Ascending aorta (tissue), 2 donors: ENCODE measurements at regions of chr20 and their contacts with region 1.

Region 1: DNA sequence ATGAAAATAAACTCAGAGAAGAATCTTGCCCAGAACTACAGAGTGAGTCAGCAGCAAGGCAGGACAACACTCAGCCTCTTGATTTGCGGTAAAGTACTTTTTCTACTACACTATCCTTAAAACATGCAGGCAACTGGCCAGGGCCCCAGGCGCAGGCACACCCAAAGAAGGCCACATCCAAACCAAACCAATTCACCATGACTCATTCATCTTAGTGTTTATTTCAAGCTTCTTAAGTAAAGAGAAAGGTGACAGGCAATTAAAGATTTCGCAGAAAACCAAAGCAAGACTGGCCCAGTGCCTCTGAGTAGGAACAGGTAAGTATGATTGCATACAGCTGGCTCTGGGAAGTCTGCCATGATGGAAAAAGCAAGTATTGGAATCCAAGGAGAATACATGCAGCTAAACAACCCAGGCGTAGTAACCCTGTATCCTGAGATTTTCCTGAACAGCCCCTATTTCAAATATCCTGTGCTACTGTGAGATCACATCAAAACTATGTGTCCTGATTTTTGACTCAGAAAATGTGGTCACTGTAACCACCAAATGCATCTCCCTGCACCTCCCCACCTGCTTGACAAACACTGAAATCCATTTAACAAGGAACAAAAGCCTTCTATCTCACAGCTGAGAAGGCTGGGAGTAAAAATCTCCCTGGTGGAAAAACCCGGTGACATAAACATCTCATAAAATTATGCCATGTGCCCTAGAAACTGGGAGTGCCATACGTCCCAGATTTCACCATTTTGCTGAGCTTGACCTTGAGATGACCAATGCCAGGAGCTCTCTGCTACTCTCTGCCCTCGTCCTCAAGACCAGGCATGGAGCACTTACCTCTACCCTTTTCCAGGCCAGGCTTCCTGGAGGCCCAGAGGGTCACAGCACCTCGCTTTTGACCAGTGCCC is 12.4 kb downstream of the WFDC3 start:
- DNase-seq: peak; percentile 88 to 97
- H3K4me3 ChIP-seq: no peak overlapping the region
- H3K27ac ChIP-seq: peak overlapping the region; percentile 91 to 92
- H3K4me1 ChIP-seq: peaks cover 26 to 46% of the 10 kb centered on the region in 2 donors
- H3K27me3 ChIP-seq: no peaks in the 10 kb centered on the region
- CTCF ChIP-seq: no peak

Region 2: GRCh38 chr20:45341939-45342859 is 437.1 kb before region 1 on chr20:
- intact Hi-C with region 1: loop called (anchors 5 kb)
- DNase-seq: peak; percentile 69 to 92
- H3K4me3 ChIP-seq: peak overlapping the region; percentile 18 to 80
- H3K27ac ChIP-seq: peak overlapping the region; percentile 93 to 96
- H3K4me1 ChIP-seq: peaks cover 53 to 80% of the 10 kb centered on the region in 2 donors
- H3K27me3 ChIP-seq: no peaks in the 10 kb centered on the region
- CTCF ChIP-seq: peak in 1 of 3 experiments; percentile 7

Region 3: DNA sequence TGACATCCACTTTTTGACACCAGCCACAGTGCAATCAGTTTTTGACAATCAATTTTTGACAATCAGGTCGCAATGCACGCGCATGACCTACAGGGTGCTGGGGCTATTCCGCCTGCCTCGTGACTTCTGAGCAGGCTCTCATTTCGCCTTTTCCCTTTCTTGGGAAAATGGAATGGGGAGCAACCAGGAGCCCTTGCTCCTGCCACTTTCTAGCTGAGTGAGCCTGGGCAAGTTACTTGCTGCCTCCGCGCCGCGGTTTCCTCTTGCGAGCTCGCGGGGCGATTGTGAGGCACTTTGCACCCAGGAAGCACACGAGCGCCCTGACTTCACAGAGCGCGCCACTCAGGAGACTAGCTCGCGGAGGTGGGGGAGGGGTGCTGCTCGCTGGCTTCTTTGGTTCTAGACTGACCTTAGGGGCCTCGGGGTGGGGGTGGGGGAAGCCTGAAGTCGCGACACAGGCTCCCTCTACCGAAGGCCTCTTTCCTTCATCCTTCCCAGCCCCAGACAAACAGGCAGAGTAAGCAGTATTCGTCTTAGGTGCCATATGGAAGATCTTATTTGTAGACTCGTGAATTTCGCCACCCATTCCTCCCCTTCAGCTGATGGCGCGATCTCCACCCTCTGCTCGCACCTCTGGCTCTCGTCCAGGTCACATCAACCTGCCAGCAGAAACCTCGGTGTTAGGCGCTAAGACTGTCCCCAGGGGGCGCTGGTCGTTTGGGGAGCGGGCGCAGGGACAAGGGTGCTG is 405.7 kb before region 1 on chr20:
- intact Hi-C with region 1: loop called (anchors 5 kb)
- DNase-seq: peak in 1 of 2 donors; percentile 93
- H3K4me3 ChIP-seq: peak overlapping the region; percentile 60 to 65
- H3K27ac ChIP-seq: peak overlapping the region; percentile 84 to 92
- H3K4me1 ChIP-seq: peaks cover 0 to 11% of the 10 kb centered on the region in 2 donors
- H3K27me3 ChIP-seq: no peaks in the 10 kb centered on the region
- CTCF ChIP-seq: peak; percentile 84 to 90 (median 86)

Region 4: DNA sequence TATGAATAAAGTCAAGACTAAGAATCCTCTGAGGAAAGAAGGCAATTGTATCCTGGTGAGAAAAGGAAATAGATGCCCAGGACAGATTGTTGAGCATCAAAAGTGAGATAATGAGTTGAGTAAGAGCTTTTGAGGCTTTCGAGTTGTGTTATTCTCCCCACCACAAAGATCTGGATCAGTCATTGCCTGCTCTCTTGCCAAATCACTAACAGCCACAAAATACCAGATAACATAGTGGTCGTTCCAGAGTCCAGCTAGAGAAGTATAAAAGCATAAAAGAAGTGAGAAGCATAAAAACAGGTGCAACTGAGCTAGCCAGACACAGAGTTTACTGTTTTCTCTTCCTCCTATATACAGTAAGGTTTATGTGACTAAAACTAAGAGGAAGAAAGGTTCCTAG is 52.2 kb before region 1 on chr20:
- intact Hi-C with region 1: no loop called
- DNase-seq: no peak
- H3K4me3 ChIP-seq: no peak overlapping the region
- H3K27ac ChIP-seq: no peak overlapping the region
- H3K4me1 ChIP-seq: no peaks in the 10 kb centered on the region
- H3K27me3 ChIP-seq: no peaks in the 10 kb centered on the region
- CTCF ChIP-seq: no peak

Region 5: GRCh38 chr20:45792332-45792686 is 13.0 kb after region 1 on chr20:
- intact Hi-C with region 1: loop called (anchors 1 kb)
- DNase-seq: no peak
- H3K4me3 ChIP-seq: peak overlapping the region; percentile 79 to 89
- H3K27ac ChIP-seq: peak overlapping the region; percentile 94
- H3K4me1 ChIP-seq: peaks cover 4% of the 10 kb centered on the region in 2 donors
- H3K27me3 ChIP-seq: no peaks in the 10 kb centered on the region
- CTCF ChIP-seq: no peak